Calu3 (cell line): ENCODE measurements at regions of chrX and their contacts with region 1.

Region 1: DNA sequence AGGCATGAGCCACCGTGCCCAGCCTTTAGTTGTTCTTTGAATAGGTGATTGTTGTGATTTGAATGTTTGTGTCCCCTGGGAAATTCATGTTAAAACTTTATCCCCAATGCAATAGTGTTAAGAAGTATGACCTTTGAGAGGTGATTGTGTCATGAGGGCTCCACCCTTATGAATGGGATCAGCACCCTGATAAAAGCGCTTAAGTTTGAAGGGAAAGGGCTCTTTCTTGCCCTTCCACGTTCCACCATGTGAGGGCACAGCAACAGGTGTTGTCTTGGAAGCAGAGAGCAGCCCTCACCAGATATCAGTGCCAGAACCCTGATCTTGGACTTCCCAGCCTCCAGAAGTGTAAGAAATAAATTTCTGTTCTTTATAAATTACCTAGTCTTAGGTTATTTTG is 33.7 kb upstream of the RP2 start:
- DNase-seq: peak; percentile 41
- H3K4me3 Mint-ChIP-seq: no peak overlapping the region
- H3K27ac Mint-ChIP-seq: no peak overlapping the region
- H3K4me1 Mint-ChIP-seq: peaks cover 10% of the 10 kb centered on the region
- H3K27me3 Mint-ChIP-seq: no peaks in the 10 kb centered on the region
- CTCF ChIP-seq: no peak

Region 2: DNA sequence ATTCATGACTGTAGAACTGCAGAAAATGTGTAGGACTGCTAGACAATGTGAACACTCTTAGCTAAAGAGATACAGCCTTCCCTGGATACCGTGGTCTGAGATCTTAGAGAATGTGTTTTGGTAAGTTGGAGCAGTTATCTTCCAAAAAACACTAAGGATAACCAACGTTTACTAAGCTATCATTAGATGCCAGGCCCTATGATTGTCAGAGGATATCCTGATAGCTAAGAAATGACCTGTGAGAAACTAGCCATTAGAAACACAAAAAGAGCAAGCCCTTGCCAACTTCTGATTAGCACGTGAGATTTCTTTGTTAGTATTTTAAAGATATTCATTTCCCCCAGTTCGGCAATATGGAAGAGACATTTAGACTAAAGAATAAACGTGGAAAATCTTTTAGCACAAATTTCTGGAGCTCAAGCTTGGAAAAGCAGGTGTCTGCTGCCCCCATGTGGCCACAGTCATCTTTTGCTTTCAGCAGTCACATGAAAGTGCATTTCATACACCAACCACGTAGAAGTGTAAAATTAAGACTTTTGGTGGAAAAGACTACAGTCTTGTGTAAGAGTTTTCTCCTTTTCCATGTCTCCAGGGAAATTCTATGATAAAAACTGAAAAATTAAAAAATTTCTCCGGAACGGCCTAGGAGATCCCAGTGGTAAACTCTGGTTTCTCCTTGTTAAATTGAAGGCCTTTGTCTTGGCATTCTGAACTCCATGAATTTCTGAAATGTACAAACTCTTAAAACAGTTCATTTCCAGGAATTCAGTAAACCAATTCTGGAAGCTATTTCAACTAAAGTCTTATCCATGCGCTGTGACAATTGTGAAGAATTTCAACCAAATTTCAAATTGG is 394.4 kb before region 1 on chrX:
- CTCF ChIA-PET with region 1: no interaction called
- intact Hi-C with region 1: no loop called
- DNase-seq: peak; percentile 75
- H3K4me3 Mint-ChIP-seq: no peak overlapping the region
- H3K27ac Mint-ChIP-seq: peak overlapping the region; percentile 18
- H3K4me1 Mint-ChIP-seq: peaks cover 13% of the 10 kb centered on the region
- H3K27me3 Mint-ChIP-seq: no peaks in the 10 kb centered on the region
- CTCF ChIP-seq: peak; percentile 64

Region 3: DNA sequence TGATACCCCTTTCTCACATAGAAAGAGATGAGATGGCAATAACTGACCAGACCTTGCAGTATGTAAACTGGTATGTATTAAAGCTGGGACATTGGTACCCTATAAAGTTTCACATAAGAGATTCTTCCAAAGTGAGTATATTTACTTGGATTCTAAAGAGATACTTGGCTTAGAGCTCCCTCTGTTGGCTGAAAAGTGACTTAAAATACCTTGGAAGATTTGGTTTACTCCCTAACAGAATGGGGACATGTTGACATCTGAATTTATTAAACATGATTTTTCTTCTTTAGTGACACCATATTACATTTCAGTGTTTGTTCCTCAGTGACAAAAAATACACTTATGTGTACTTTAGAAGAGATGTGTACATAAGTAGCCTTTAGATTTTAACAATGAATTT is 227.2 kb after region 1 on chrX:
- CTCF ChIA-PET with region 1: no interaction called
- intact Hi-C with region 1: loop called (anchors 10 kb)
- DNase-seq: peak; percentile 35
- H3K4me3 Mint-ChIP-seq: no peak overlapping the region
- H3K27ac Mint-ChIP-seq: no peak overlapping the region
- H3K4me1 Mint-ChIP-seq: no peaks in the 10 kb centered on the region
- H3K27me3 Mint-ChIP-seq: no peaks in the 10 kb centered on the region
- CTCF ChIP-seq: no peak

Region 4: GRCh38 chrX:47093248-47093647 is 290.1 kb after region 1 on chrX:
- CTCF ChIA-PET with region 1: no interaction called
- intact Hi-C with region 1: loop called (anchors 10 kb)
- DNase-seq: no peak
- H3K4me3 Mint-ChIP-seq: no peak overlapping the region
- H3K27ac Mint-ChIP-seq: no peak overlapping the region
- H3K4me1 Mint-ChIP-seq: no peaks in the 10 kb centered on the region
- H3K27me3 Mint-ChIP-seq: no peaks in the 10 kb centered on the region
- CTCF ChIP-seq: peak; percentile 12